ENCODE measurements at regions of chr14 and their contacts with region 1.

Region 1: GRCh38 chr14:25049568-25050268 is at the start of gene STXBP6:
- DNase-seq: peak; percentile 71 to 76 (median 73)
- ATAC-seq: peak; percentile 93 to 96 (median 94)
- H3K4me3 ChIP-seq: peak within 1 kb of the TSS; percentile 62 to 69 (median 62)
- H3K27ac ChIP-seq: peak within 1 kb of the TSS in 2 of 3 donors; percentile 9 to 12
- H3K4me1 ChIP-seq: peaks cover 0 to 7% (median 0%) of the 10 kb centered on the region in 4 donors
- H3K27me3 ChIP-seq: no peaks in the 10 kb centered on the region
- CTCF ChIP-seq: no peak
- POLR2A ChIP-seq: no peak
- total RNA-seq, gene STXBP6: 0.55 to 1.7 (median 1.1) TPM

Region 2: GRCh38 chr14:24734878-24735500 is 314.7 kb before region 1 on chr14:
- intact Hi-C with region 1: loop called in 1 of 2 experiments (anchors 10 kb)
- DNase-seq: no peak
- ATAC-seq: peak; percentile 76 to 82 (median 77)
- H3K4me3 ChIP-seq: no peak overlapping the region
- H3K27ac ChIP-seq: no peak overlapping the region
- H3K4me1 ChIP-seq: no peaks in the 10 kb centered on the region
- H3K27me3 ChIP-seq: no peaks in the 10 kb centered on the region
- CTCF ChIP-seq: peak; percentile 69 to 83 (median 75)
- POLR2A ChIP-seq: no peak

Region 3: GRCh38 chr14:24806061-24806678 is 243.5 kb before region 1 on chr14:
- intact Hi-C with region 1: loop called in 1 of 2 experiments (anchors 5 kb)
- DNase-seq: peak; percentile 75 to 81 (median 81)
- ATAC-seq: peak; percentile 68 to 84 (median 78)
- H3K4me3 ChIP-seq: no peak overlapping the region
- H3K27ac ChIP-seq: peak overlapping the region in 1 of 3 donors; percentile 82
- H3K4me1 ChIP-seq: peaks cover 0 to 29% (median 8%) of the 10 kb centered on the region in 4 donors
- H3K27me3 ChIP-seq: no peaks in the 10 kb centered on the region
- CTCF ChIP-seq: peak; percentile 89 to 95 (median 92)
- POLR2A ChIP-seq: no peak